A549 (cell line): ENCODE measurements at regions of chr1 and their contacts with region 1.

Region 1: DNA sequence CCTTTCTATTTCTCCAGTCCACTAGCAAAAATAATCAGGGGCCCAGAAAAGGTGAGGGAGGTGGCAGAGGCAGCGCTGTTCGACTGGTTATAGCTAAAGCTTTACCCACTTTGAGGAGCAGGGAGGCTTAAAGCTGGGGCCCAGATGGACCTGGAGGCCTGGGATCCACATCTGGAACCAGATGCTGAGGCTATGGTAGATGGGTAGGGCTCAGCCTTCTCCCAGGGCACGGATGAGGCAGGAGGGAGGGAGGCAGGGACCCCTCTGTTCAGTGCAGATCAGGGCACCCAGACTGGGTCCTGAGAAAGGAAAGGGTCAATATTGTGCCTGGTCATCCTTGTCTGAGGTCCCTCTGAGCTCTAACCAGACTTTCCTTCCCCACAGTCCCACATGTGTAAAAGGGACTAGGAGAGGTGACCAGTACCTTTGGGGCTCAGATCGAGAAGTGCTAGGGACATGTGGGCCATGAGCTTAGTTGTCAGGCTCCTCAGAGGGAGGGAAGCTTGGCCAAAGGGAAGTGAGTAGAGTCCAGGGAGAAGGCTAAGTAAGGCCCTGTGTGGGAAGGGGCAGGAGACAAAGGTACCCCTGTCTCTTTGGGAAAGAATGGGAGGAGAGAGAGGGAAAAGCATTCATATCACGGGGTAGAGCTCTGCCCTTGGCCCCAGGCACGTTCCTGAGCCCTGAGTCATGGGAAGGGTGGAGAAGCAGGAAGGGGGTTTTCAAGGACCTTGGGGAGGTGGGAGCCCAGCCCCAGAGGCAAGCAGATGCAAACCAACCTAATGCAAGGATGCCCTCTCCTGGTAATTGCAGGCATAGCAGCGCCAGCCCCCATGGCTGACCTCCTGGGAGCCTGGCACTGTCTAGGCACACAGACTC is 15.4 kb downstream of the LMNA start:
- DNase-seq: peak; percentile 76 to 96
- ATAC-seq: peak; percentile 62 to 67
- H3K4me3 ChIP-seq: no peak overlapping the region
- H3K27ac ChIP-seq: peak overlapping the region; percentile 95 to 98
- H3K4me1 ChIP-seq: peaks cover 57% of the 10 kb centered on the region
- CTCF ChIP-seq: peak; percentile 96
- EP300 ChIP-seq: no peak; a peak in 1 of 5 replicates
- POLR2A ChIP-seq: peak; percentile 19; the same call in 1 of the 2 replicates
- RAD21 ChIP-seq: peak; percentile 99

Region 2: GRCh38 chr1:155934097-155934935 is 195.6 kb before region 1 on chr1 and contains the start of gene KHDC4:
- CTCF ChIA-PET with region 1: interaction called, 10 read pairs
- POLR2A ChIA-PET with region 1: interaction called, 3 read pairs
- DNase-seq: peak; percentile 97 to 99
- ATAC-seq: peak; percentile 94 to 97
- H3K4me3 ChIP-seq: peak within 1 kb of the TSS; percentile 81
- H3K27ac ChIP-seq: peak within 1 kb of the TSS; percentile 91 to 94
- H3K4me1 ChIP-seq: peaks cover 42% of the 10 kb centered on the region
- CTCF ChIP-seq: no peak
- EP300 ChIP-seq: no peak
- POLR2A ChIP-seq: peak; percentile 94
- RAD21 ChIP-seq: no peak
- polyA plus RNA-seq, gene KHDC4: 69.9 and 72.3 TPM in 2 replicates

Region 3: GRCh38 chr1:156076501-156077429 is 53.2 kb before region 1 on chr1:
- CTCF ChIA-PET with region 1: interaction called, 2,239 read pairs
- POLR2A ChIA-PET with region 1: interaction called, 3 read pairs
- DNase-seq: no peak
- ATAC-seq: no peak
- H3K4me3 ChIP-seq: no peak overlapping the region
- H3K27ac ChIP-seq: no peak overlapping the region
- H3K4me1 ChIP-seq: peaks cover 11% of the 10 kb centered on the region; the same call in 2 of the 3 replicates
- CTCF ChIP-seq: no peak
- EP300 ChIP-seq: no peak
- POLR2A ChIP-seq: no peak
- RAD21 ChIP-seq: no peak

Region 4: GRCh38 chr1:156104065-156104810 is 25.7 kb before region 1 on chr1:
- CTCF ChIA-PET with region 1: interaction called, 2,239 read pairs
- POLR2A ChIA-PET with region 1: interaction called, 49 read pairs
- DNase-seq: peak; percentile 85 to 87
- ATAC-seq: peak; percentile 46 to 66; a peak in 5 of 6 replicates
- H3K4me3 ChIP-seq: no peak overlapping the region
- H3K27ac ChIP-seq: peak overlapping the region; percentile 92 to 96
- H3K4me1 ChIP-seq: peaks cover 92% of the 10 kb centered on the region
- CTCF ChIP-seq: no peak
- EP300 ChIP-seq: no peak
- POLR2A ChIP-seq: no peak
- RAD21 ChIP-seq: no peak

Region 5: GRCh38 chr1:156140879-156141252 is 10.9 kb after region 1 on chr1:
- CTCF ChIA-PET with region 1: interaction called, 42 read pairs
- POLR2A ChIA-PET with region 1: no interaction called
- DNase-seq: no peak
- ATAC-seq: peak; percentile 0 to 3; a peak in 2 of 6 replicates
- H3K4me3 ChIP-seq: no peak overlapping the region
- H3K27ac ChIP-seq: no peak overlapping the region
- H3K4me1 ChIP-seq: peaks cover 7% of the 10 kb centered on the region
- CTCF ChIP-seq: no peak
- EP300 ChIP-seq: no peak
- POLR2A ChIP-seq: no peak
- RAD21 ChIP-seq: no peak

Region 6: DNA sequence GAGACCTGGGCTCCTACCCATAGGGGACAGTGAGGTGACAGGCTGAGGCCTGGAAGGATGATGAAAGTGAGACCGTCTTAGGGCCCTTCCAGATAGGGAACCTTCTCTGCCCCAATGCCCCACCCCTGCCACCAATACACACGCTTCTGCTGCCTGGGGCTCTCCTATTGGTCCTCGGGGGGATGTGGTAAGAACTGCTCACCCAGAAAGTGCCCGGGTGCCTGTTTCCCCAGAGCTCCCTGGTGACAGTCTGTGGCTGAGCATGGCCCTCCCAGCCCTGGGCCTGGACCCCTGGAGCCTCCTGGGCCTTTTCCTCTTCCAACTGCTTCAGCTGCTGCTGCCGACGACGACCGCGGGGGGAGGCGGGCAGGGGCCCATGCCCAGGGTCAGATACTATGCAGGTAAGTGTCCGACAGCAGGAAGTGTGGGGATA is 24.4 kb after region 1 on chr1:
- CTCF ChIA-PET with region 1: interaction called, 10 read pairs
- POLR2A ChIA-PET with region 1: no interaction called
- DNase-seq: no peak
- ATAC-seq: no peak
- H3K4me3 ChIP-seq: no peak overlapping the region
- H3K27ac ChIP-seq: no peak overlapping the region
- H3K4me1 ChIP-seq: 0 out of 3 replicates have a peak, but pooled peaks cover 4% of the 10 kb centered on the region
- CTCF ChIP-seq: no peak
- EP300 ChIP-seq: no peak
- POLR2A ChIP-seq: no peak
- RAD21 ChIP-seq: no peak

Region 7: GRCh38 chr1:156226116-156226538 is 96.2 kb after region 1 on chr1:
- CTCF ChIA-PET with region 1: interaction called, 639 read pairs
- POLR2A ChIA-PET with region 1: interaction called, 3 read pairs
- DNase-seq: no peak
- ATAC-seq: no peak
- H3K4me3 ChIP-seq: no peak overlapping the region
- H3K27ac ChIP-seq: no peak overlapping the region
- H3K4me1 ChIP-seq: peaks cover 14% of the 10 kb centered on the region
- CTCF ChIP-seq: no peak
- EP300 ChIP-seq: no peak
- POLR2A ChIP-seq: no peak
- RAD21 ChIP-seq: no peak